CD14-positive monocyte (primary cell): ENCODE measurements at regions of chr19 and their contacts with region 1.

Region 1: DNA sequence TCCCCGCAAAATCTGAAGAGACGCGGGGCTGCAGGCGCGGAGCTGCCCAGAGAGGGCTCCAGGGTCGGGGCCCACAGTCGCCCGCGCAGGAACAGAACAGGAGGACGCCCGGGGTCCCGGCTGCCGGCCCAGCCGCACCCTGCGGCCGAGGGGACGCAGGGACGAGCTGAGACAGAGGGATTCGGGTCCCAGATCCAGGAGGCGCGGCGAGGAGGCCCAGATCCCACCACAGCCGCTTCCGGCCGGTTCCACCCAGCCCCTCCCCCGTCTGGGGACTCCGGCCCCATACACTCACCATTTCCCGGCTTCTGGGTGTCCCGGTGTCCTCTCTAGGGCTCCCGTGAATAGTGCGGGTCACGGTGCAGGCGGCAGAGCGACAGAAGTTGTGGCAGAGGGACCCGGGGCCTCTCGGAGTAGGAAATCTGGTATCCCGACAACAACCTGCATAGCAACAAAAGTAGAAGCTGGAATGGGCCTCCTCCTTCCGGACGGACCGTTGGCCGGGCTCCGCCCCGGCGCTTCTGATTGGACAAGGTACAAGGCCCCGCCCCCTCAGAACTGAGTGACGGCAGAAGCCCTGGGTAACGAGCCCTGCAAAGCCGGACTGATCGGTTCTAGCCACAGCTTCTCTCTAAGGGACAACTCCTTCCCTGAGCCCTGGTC is at the start of gene ZNF20:
- DNase-seq: peak; percentile 86 to 93 (median 86)
- H3K4me3 ChIP-seq: peak within 1 kb of the TSS; percentile 84 to 99 (median 93)
- H3K4me3 Mint-ChIP-seq: peak within 1 kb of the TSS; percentile 96 to 97
- H3K27ac ChIP-seq: peak within 1 kb of the TSS; percentile 32 to 78
- H3K27ac Mint-ChIP-seq: peak within 1 kb of the TSS; percentile 83 to 94 (median 89)
- H3K4me1 ChIP-seq: peaks cover 23 to 25% of the 10 kb centered on the region in 2 donors
- H3K4me1 Mint-ChIP-seq: peaks cover 36% of the 10 kb centered on the region
- H3K27me3 ChIP-seq: no peaks in the 10 kb centered on the region
- H3K27me3 Mint-ChIP-seq: peaks cover 0 to 3% (median 1%) of the 10 kb centered on the region in 3 donors
- CTCF ChIP-seq: no peak
- polyA plus RNA-seq, gene ZNF20: 0.86 to 2.6 (median 1.3) TPM

Region 2: GRCh38 chr19:11798391-11799330 is 341.4 kb before region 1 on chr19 and contains the start of gene ZNF491:
- intact Hi-C with region 1: loop called (anchors 5 to 10 kb)
- DNase-seq: peak; percentile 71 to 83 (median 75)
- H3K4me3 ChIP-seq: peak within 1 kb of the TSS; percentile 68 to 86 (median 71)
- H3K4me3 Mint-ChIP-seq: peak within 1 kb of the TSS; percentile 92 to 96
- H3K27ac ChIP-seq: peak within 1 kb of the TSS; percentile 23 to 72
- H3K27ac Mint-ChIP-seq: peak within 1 kb of the TSS; percentile 31 to 88 (median 81)
- H3K4me1 ChIP-seq: peaks cover 16 to 22% of the 10 kb centered on the region in 2 donors
- H3K4me1 Mint-ChIP-seq: peaks cover 22% of the 10 kb centered on the region
- H3K27me3 ChIP-seq: no peaks in the 10 kb centered on the region
- H3K27me3 Mint-ChIP-seq: peaks cover 1 to 10% (median 4%) of the 10 kb centered on the region in 3 donors
- CTCF ChIP-seq: no peak
- polyA plus RNA-seq, gene ZNF491: 0.27 to 0.92 TPM in 2 of 3 donors, not detected in the other

Region 3: GRCh38 chr19:11881151-11881800 is 258.7 kb before region 1 on chr19:
- intact Hi-C with region 1: loop called (anchors 2 kb)
- DNase-seq: peak; percentile 36 to 66 (median 57)
- H3K4me3 ChIP-seq: no peak overlapping the region
- H3K4me3 Mint-ChIP-seq: no peak overlapping the region
- H3K27ac ChIP-seq: no peak overlapping the region
- H3K27ac Mint-ChIP-seq: peak overlapping the region in 1 of 7 donors; percentile 60
- H3K4me1 ChIP-seq: no peaks in the 10 kb centered on the region
- H3K4me1 Mint-ChIP-seq: peaks cover 2% of the 10 kb centered on the region
- H3K27me3 ChIP-seq: no peaks in the 10 kb centered on the region
- H3K27me3 Mint-ChIP-seq: peaks cover 2 to 9% (median 2%) of the 10 kb centered on the region in 3 donors
- CTCF ChIP-seq: peak; percentile 70

Region 4: DNA sequence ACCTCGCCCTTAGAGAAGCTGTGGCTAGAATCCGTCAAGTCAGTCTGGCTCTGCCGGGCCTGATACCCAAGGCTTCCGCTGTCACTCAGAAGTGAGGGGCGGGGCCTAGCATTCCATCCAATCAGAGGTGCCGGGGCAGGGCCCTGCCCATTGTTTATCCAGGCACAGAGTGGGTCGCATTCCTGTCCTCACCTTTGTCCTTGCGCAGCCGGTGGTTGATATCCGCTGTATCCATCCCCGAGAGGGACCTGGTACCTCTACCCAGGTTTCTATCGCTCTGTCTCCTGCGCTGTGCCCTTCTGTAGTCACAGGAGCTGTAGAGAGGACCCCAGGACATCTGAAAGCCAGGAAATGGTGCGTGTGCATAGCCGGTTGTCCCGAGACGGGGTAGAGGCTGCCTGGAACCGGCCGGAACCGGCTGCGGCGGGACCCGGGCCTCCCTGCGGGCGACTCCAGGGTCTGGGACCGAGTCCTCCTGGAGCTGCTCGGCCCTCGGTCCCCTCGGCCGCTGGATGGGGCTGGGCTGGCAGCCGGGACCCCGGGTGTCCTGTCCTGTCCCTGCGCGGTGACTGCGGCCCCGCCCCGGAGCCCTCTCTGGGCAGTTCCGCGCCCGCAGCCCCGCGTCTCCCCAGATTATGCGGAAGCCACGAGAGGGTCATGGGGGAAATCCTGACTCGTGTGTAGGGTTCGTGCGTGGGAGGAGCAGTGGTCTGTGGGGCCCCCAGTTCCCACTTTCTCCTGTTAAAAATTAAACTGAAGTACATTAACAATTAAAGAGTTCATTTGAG is 175.0 kb before region 1 on chr19 and contains the start of gene ZNF763:
- intact Hi-C with region 1: loop called (anchors 1 to 2 kb)
- DNase-seq: peak; percentile 87 to 95 (median 93)
- H3K4me3 ChIP-seq: peak within 1 kb of the TSS; percentile 68 to 99 (median 96)
- H3K4me3 Mint-ChIP-seq: peak within 1 kb of the TSS; percentile 94 to 99
- H3K27ac ChIP-seq: peak within 1 kb of the TSS; percentile 86 to 99
- H3K27ac Mint-ChIP-seq: peak within 1 kb of the TSS; percentile 93 to 99 (median 97)
- H3K4me1 ChIP-seq: peaks cover 18 to 21% of the 10 kb centered on the region in 2 donors
- H3K4me1 Mint-ChIP-seq: peaks cover 25% of the 10 kb centered on the region
- H3K27me3 ChIP-seq: no peaks in the 10 kb centered on the region
- H3K27me3 Mint-ChIP-seq: peaks cover 0 to 6% (median 2%) of the 10 kb centered on the region in 3 donors
- CTCF ChIP-seq: no peak
- polyA plus RNA-seq, gene ZNF763: 1.3 to 2.6 (median 1.7) TPM

Region 5: GRCh38 chr19:12092065-12092867 is 47.8 kb before region 1 on chr19:
- intact Hi-C with region 1: loop called (anchors 5 kb)
- DNase-seq: peak; percentile 60 to 70 (median 63)
- H3K4me3 ChIP-seq: peak overlapping the region; percentile 65 to 89 (median 74)
- H3K4me3 Mint-ChIP-seq: peak overlapping the region; percentile 91 to 95
- H3K27ac ChIP-seq: peak overlapping the region; percentile 47 to 64
- H3K27ac Mint-ChIP-seq: peak overlapping the region in 6 of 7 donors; percentile 40 to 85 (median 73)
- H3K4me1 ChIP-seq: peaks cover 13 to 14% of the 10 kb centered on the region in 2 donors
- H3K4me1 Mint-ChIP-seq: peaks cover 31% of the 10 kb centered on the region
- H3K27me3 ChIP-seq: no peaks in the 10 kb centered on the region
- H3K27me3 Mint-ChIP-seq: peaks cover 0 to 3% (median 1%) of the 10 kb centered on the region in 3 donors
- CTCF ChIP-seq: no peak